ENCODE measurements at regions of chr4 and their contacts with region 1.

Region 1: GRCh38 chr4:109548655-109549054 is 11.4 kb upstream of the MCUB start:
- DNase-seq: no peak
- CTCF ChIP-seq: no peak

Region 2: DNA sequence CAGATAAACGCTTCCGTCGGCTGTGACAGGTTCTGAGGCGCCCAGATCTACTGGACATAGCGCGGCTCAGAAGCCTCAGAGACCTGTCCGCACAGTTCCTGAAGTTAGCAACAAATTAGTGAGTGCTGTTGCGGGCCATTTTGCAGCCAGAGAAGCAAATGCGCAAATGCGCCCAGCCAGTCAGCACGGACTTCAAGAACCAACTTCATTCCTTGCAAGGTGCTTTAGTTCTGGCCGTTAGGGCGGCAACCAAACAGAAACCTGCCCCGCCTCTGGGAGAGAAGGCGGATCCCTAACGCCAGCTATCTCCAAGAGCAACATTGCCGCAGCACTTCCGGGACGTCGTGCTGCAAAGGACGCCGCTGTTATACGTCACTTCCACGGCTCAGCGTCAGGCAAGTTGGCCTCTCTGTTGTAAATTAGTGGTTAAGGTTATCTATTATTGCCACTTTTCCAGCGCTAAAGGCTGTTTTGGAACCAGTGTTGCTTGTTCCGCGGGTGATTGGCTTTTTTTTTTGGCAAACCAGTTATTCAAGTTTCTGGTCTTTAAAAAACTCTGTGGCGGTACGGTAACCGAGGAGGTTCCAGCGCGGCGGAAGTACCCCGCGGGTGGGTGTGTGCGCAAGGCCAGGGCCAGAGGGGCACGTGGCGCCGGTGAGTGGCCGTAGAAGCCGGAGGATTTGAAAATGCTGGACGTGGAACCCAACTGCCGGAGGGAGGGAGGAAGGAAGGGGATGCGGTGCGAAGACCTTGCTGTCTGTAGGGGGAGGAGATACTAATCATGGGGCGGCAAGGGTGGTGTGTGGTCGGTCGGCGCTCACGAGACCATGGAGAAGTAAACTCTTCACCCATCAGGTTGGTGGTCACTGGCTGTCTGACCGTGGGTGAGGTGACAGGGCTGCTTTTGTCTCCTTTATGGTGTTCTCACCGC is 266.8 kb after region 1 on chr4 and contains the start of gene GAR1:
- in situ Hi-C with region 1: loop called (anchors 25 kb)
- DNase-seq: peak; percentile 91
- CTCF ChIP-seq: no peak